HepG2 (cell line): ENCODE measurements at regions of chrX and their contacts with region 1.

Region 1: DNA sequence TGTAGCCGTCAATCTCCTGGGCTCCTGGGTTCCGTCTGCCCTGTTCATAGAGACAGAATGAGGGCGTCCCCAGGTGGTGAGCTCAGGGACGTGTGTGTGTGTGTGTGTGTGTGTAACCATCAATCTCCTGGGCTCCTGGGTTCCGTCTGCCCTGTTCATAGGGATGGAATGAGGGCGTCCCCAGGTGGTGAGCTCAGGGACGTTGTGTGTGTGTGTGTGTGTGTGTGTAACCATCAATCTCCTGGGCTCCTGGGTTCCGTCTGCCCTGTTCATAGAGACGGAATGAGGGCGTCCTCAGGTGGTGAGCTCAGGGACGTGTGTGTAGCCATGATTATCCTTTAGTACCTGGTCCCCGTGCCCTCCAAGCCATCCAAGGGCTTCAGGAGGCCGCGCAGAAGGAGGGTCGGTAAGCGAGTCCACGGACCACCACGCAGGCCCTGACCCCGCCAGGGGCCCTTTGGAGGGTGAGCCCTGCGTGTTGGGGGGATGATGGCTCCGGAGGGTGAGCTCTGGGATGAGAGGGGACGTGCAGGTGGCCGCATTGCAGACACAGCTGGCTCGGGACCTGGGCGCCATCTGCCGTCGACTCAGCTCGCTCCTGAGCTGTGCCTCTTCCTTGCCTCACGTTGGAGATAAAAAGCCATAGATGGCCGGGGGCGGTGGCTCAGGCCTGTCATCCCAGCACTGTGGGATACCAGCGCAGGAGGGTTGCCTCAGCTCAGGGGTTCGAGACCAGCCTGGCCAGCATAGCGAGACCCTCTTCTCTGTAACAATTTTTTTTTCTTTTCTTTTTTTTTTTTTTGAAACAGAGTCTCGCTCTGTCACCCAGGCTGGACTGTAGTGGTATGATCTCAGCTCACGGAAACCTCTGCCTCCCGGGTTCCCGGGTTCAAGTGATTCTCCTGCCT is 5.4 kb upstream of the GTPBP6 start:
- DNase-seq: peak; percentile 68
- ATAC-seq: peak; percentile 76
- H3K4me3 ChIP-seq: peak overlapping the region in 2 of 3 experiments; percentile 44 to 60; a peak in 5 of 6 replicates
- H3K27ac ChIP-seq: no peak overlapping the region
- H3K4me1 ChIP-seq: peaks cover 49% of the 10 kb centered on the region
- H3K27me3 ChIP-seq: no peaks in the 10 kb centered on the region
- CTCF ChIP-seq: peak; percentile 83
- EP300 ChIP-seq: no peak
- POLR2A ChIP-seq: no peak
- RAD21 ChIP-seq: peak; percentile 66; the same call in 1 of the 2 replicates

Region 2: GRCh38 chrX:373637-374471 is 49.9 kb after region 1 on chrX:
- CTCF ChIA-PET with region 1: no interaction called
- POLR2A ChIA-PET with region 1: no interaction called
- in situ Hi-C with region 1: no loop called
- intact Hi-C with region 1: loop called (anchors 10 kb)
- DNase-seq: peak; percentile 27
- ATAC-seq: peak; percentile 86
- H3K4me3 ChIP-seq: peak overlapping the region; percentile 62 to 79 (median 70)
- H3K27ac ChIP-seq: no peak overlapping the region
- H3K4me1 ChIP-seq: peaks cover 27% of the 10 kb centered on the region
- H3K27me3 ChIP-seq: no peaks in the 10 kb centered on the region; a peak in 1 of 5 replicates
- CTCF ChIP-seq: peak; percentile 48
- EP300 ChIP-seq: no peak
- POLR2A ChIP-seq: 0 out of 4 replicates have a peak, but pooled peaks of 1 of the 2 experiments have one; percentile 34
- RAD21 ChIP-seq: no peak

Region 3: GRCh38 chrX:644304-645281 is 320.6 kb after region 1 on chrX:
- CTCF ChIA-PET with region 1: no interaction called
- POLR2A ChIA-PET with region 1: no interaction called
- in situ Hi-C with region 1: no loop called
- intact Hi-C with region 1: no loop called
- DNase-seq: no peak
- ATAC-seq: no peak
- H3K4me3 ChIP-seq: no peak overlapping the region
- H3K27ac ChIP-seq: no peak overlapping the region
- H3K4me1 ChIP-seq: no peaks in the 10 kb centered on the region
- H3K27me3 ChIP-seq: peaks cover 3 to 14% of the 10 kb centered on the region in 2 experiments; a peak in 2 of 5 replicates
- CTCF ChIP-seq: no peak
- EP300 ChIP-seq: no peak
- POLR2A ChIP-seq: no peak
- RAD21 ChIP-seq: no peak